ENCODE measurements at regions of chr2 and their contacts with region 1.

Region 1: DNA sequence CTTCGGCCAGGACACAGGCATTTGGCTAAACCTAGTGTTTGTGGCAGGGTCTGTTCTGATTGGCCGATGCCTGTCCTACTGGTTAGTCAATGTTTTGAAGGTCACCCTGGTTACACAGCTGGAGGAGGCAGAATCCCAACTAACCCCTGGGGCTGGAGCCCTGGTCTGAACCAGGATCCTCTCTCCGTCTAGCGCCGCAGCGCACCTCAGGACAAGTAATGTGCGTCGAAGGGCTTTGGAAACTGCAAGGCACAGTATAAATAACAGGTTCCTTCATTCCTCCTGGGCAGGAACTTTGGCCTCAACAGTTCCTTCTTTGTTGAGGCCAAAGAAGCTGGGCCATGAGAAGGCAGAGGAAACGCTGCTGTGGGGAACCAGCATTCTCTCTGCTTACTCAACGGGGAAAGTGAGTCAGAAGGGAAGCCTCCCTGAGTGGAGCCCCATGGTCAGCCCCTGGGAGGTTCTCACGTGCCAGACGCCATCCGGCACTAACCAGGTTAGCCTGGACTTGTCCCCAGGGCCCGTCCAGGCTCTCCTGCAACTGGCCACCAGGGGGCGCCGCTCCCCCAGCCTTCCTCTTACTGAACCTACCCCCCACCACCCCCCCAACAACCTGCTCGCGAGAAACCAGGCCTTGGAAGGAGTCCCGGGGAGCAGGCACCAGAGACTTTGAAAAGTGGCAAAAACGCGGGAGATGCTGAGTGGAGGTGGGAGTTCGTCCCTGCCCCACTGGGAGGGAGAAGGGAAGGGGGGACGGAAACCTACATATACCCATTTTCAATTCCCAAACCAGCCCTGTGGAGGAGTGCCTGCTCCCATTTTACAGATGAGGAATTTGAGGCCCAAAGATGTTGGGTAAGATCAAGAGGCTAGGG is 19.8 kb downstream of the TEX44 start:
- DNase-seq: peak; percentile 93
- ATAC-seq: peak; percentile 39
- H3K4me3 ChIP-seq: peak overlapping the region in 4 of 5 experiments; percentile 9 to 68 (median 50)
- H3K4me3 Mint-ChIP-seq: peak overlapping the region; percentile 86
- H3K27ac ChIP-seq: peak overlapping the region; percentile 90 to 96
- H3K27ac Mint-ChIP-seq: peak overlapping the region; percentile 96
- H3K4me1 ChIP-seq: peaks cover 21 to 34% of the 10 kb centered on the region in 2 donors
- H3K4me1 Mint-ChIP-seq: peaks cover 42% of the 10 kb centered on the region
- H3K27me3 ChIP-seq: no peaks in the 10 kb centered on the region
- H3K27me3 Mint-ChIP-seq: no peaks in the 10 kb centered on the region
- CTCF ChIP-seq: peak; percentile 87

Region 2: DNA sequence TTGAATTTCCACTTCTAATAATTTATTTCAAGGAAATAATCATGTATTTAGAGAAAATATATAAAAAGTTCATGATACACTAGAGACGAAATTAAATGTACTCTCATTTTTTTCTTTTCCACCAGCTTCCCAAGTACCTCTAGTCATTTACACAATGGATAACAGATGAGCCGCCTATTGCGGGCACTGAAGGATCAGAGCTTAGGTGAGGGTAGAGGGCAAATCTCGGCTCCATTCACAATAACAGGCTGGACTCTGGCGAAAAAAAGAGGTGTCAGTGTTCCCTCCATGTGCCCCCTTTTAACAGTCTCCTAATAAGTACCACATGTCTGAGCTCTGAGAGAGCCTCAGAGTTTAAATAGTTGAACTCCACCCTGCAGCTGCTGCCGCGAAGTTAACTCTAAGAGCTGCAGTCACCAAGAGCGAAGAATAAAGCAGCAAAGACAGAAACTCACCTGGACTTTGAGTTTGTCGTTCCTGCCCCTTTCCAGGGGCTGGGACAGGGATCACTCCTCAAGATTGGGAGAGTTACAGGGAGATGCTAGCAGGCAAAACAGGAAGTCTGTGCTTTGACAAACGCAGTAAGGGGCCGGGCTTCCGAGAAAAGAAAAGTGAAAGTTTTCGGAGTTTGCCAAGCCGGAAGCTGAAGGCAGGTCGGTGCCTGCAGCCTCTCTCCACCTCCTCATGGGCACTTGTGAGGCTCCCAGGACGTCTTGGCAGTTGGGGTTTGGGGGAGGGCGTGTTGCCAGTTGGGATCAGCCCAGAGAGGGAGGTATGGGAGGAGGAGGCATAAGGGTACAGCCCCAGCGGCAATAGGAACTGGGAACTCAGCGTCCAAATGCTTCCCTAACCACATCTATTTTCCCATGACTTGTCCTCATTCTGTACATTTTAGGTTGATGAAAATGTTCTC is 1392.7 kb before region 1 on chr2 and contains the start of gene SP110:
- CTCF ChIA-PET with region 1: no interaction called
- POLR2A ChIA-PET with region 1: no interaction called
- intact Hi-C with region 1: loop called (anchors 5 kb)
- DNase-seq: peak; percentile 87
- ATAC-seq: peak; percentile 76
- H3K4me3 ChIP-seq: peak within 1 kb of the TSS; percentile 66 to 100 (median 89)
- H3K4me3 Mint-ChIP-seq: peak within 1 kb of the TSS; percentile 99
- H3K27ac ChIP-seq: peak within 1 kb of the TSS; percentile 71 to 80
- H3K27ac Mint-ChIP-seq: peak within 1 kb of the TSS; percentile 96
- H3K4me1 ChIP-seq: peaks cover 72 to 83% of the 10 kb centered on the region in 2 donors
- H3K4me1 Mint-ChIP-seq: peaks cover 78% of the 10 kb centered on the region
- H3K27me3 ChIP-seq: no peaks in the 10 kb centered on the region
- H3K27me3 Mint-ChIP-seq: no peaks in the 10 kb centered on the region
- CTCF ChIP-seq: no peak
- total RNA-seq, gene SP110: 261 and 280 TPM in 2 replicates

Region 3: GRCh38 chr2:231503766-231504165 is 108.7 kb before region 1 on chr2:
- CTCF ChIA-PET with region 1: no interaction called
- POLR2A ChIA-PET with region 1: no interaction called
- intact Hi-C with region 1: no loop called
- DNase-seq: no peak
- ATAC-seq: no peak
- H3K4me3 ChIP-seq: no peak overlapping the region
- H3K4me3 Mint-ChIP-seq: no peak overlapping the region
- H3K27ac ChIP-seq: no peak overlapping the region
- H3K27ac Mint-ChIP-seq: no peak overlapping the region
- H3K4me1 ChIP-seq: no peaks in the 10 kb centered on the region
- H3K4me1 Mint-ChIP-seq: no peaks in the 10 kb centered on the region
- H3K27me3 ChIP-seq: no peaks in the 10 kb centered on the region
- H3K27me3 Mint-ChIP-seq: no peaks in the 10 kb centered on the region
- CTCF ChIP-seq: no peak

Region 4: GRCh38 chr2:231568785-231569435 is 43.5 kb before region 1 on chr2:
- CTCF ChIA-PET with region 1: no interaction called
- POLR2A ChIA-PET with region 1: no interaction called
- intact Hi-C with region 1: no loop called
- DNase-seq: no peak
- ATAC-seq: no peak
- H3K4me3 ChIP-seq: no peak overlapping the region
- H3K4me3 Mint-ChIP-seq: no peak overlapping the region
- H3K27ac ChIP-seq: no peak overlapping the region
- H3K27ac Mint-ChIP-seq: no peak overlapping the region
- H3K4me1 ChIP-seq: no peaks in the 10 kb centered on the region
- H3K4me1 Mint-ChIP-seq: no peaks in the 10 kb centered on the region
- H3K27me3 ChIP-seq: no peaks in the 10 kb centered on the region
- H3K27me3 Mint-ChIP-seq: no peaks in the 10 kb centered on the region
- CTCF ChIP-seq: no peak

Region 5: DNA sequence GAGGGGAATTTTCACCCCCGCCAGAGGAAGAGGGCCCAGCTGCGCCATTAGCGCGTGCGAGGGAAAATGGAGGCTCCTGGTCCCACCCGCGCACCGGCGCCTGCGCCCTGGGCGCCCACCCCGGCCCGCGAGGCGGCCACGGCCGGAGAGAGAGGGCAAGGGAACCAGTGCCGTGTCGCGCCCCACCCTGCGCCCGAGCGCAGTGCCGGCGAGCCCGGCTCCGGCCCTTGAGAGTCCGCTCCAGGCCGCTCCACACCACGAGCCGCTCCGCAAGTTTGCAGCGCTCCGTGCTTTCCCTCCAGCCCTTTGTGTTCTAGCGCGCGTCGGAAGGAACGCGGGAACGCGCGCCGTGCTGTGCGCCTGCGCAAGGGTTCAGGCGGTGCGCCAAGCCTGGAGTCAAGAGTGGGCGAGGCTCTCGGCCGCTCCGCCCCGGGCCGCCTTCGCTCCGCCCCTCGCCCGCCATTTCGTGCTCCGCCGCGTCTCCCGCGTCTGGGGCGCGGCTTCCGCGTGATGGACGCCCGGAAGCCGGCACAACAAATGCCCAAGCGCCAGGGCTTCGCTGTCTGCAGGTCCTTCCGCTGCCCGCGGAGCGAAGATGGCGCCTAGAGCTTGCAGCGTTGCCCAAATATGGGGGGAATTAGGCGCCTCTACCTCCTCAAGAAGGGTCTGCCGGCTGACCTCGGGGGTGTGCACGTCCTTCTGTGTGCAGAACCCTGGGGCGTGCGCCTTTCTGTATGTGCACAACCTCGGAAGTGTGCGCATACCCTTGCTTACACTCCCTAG is 49.8 kb after region 1 on chr2:
- CTCF ChIA-PET with region 1: interaction called, 561 read pairs
- POLR2A ChIA-PET with region 1: interaction called, 120 read pairs
- intact Hi-C with region 1: loop called (anchors 1 kb)
- DNase-seq: peak; percentile 100
- ATAC-seq: peak; percentile 76
- H3K4me3 ChIP-seq: peak overlapping the region; percentile 23 to 58 (median 49)
- H3K4me3 Mint-ChIP-seq: peak overlapping the region; percentile 79
- H3K27ac ChIP-seq: peak overlapping the region; percentile 90 to 98
- H3K27ac Mint-ChIP-seq: peak overlapping the region; percentile 96
- H3K4me1 ChIP-seq: peaks cover 44 to 56% of the 10 kb centered on the region in 2 donors
- H3K4me1 Mint-ChIP-seq: peaks cover 58% of the 10 kb centered on the region
- H3K27me3 ChIP-seq: no peaks in the 10 kb centered on the region
- H3K27me3 Mint-ChIP-seq: no peaks in the 10 kb centered on the region
- CTCF ChIP-seq: no peak

Region 6: DNA sequence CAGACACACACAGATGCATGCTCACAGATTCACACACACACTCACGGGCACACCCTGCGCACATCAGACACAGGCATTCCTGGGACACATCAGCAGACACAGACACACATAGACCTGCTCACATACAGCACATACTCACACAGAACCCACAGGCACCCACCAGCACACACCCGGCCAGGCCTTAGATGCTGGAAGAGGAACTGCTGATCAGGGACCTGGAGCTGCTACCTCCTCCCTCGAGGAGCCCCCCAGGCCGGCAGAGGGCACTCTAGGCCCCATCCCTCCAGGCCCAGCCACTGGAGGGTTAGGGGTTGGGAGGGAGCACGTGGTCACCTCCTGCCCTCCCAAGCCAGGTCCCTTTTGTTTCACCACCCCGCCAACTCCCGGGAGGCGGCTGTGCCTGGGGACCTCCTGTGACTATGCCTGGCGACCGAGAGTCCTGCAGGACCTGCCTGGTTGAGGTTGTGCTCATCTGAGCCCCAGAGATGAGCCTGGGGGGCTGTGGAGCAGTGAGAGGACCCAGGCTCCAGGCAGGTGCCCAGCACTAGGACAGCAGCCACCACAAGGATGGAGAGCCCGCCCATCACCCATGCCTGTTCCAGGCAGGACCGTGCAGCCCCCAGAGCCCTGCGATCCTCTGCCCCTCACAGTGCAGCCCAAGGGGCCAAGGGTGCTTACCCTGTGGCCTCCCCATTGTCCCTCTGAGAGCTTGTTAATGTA is 74.9 kb after region 1 on chr2:
- CTCF ChIA-PET with region 1: interaction called, 79 read pairs
- POLR2A ChIA-PET with region 1: interaction called, 8 read pairs
- intact Hi-C with region 1: no loop called
- DNase-seq: peak; percentile 84
- ATAC-seq: peak; percentile 91
- H3K4me3 ChIP-seq: no peak overlapping the region
- H3K4me3 Mint-ChIP-seq: peak overlapping the region; percentile 14
- H3K27ac ChIP-seq: no peak overlapping the region
- H3K27ac Mint-ChIP-seq: peak overlapping the region; percentile 57
- H3K4me1 ChIP-seq: peaks cover 15 to 36% of the 10 kb centered on the region in 2 donors
- H3K4me1 Mint-ChIP-seq: peaks cover 38% of the 10 kb centered on the region
- H3K27me3 ChIP-seq: no peaks in the 10 kb centered on the region
- H3K27me3 Mint-ChIP-seq: no peaks in the 10 kb centered on the region
- CTCF ChIP-seq: peak; percentile 70

Region 7: GRCh38 chr2:231780909-231781797 is 168.7 kb after region 1 on chr2 and contains the start of gene PDE6D:
- CTCF ChIA-PET with region 1: interaction called, 7 read pairs
- POLR2A ChIA-PET with region 1: interaction called, 9 read pairs
- intact Hi-C with region 1: loop called (anchors 1 kb)
- DNase-seq: peak; percentile 98
- ATAC-seq: peak; percentile 89
- H3K4me3 ChIP-seq: peak within 1 kb of the TSS; percentile 72 to 92 (median 85)
- H3K4me3 Mint-ChIP-seq: peak within 1 kb of the TSS; percentile 100
- H3K27ac ChIP-seq: peak within 1 kb of the TSS; percentile 63 to 87
- H3K27ac Mint-ChIP-seq: peak within 1 kb of the TSS; percentile 97
- H3K4me1 ChIP-seq: peaks cover 28 to 32% of the 10 kb centered on the region in 2 donors
- H3K4me1 Mint-ChIP-seq: peaks cover 63% of the 10 kb centered on the region
- H3K27me3 ChIP-seq: no peaks in the 10 kb centered on the region
- H3K27me3 Mint-ChIP-seq: no peaks in the 10 kb centered on the region
- CTCF ChIP-seq: no peak
- total RNA-seq, gene PDE6D: 31.9 and 40.8 TPM in 2 replicates